Left colon (tissue), 2 donors: ENCODE measurements at regions of chr13 and their contacts with region 1.

Region 1: DNA sequence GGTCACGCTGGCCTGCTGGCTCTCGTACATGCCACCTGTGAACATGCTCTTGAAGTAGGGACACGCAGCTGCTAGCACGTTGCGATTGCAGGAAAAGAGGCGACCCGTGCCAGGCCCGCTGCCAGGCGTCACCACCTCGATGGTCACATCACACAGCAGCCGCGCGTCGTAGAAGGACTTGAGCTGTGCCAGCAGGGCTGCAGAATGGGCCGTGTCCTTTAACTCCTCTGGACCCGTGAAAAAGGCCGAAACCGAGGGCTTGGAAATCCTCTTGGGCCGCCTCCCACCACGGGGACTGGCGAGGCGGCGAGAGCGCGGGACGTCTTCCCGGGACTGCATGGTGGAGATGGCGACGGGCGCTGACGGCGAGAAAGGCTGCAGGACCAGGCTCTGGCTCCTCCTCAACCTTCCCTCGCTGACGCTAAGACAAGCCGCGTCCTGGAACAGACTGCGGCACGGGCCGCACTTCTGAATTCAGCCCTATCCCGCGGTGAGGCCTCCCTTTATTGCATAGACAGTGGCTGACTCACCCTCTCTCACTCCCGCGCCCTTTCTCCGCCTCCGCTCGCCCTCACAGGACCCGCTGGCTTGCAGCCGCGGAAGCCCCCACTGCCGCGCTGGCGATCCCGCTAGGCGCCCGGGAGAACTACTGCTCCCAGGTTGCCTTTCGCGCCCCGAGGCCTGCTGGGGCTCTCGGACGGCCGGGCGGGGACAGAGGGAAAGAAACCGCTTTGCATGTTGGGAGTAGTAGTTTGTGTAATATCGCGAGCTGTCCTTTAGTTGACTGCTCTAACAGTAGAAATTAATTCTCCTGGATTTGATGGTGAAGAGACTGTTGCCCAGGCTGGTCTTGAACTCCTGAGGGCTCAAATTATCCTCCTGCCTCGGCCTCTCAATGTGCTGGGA is at the start of gene KBTBD7:
- DNase-seq: peak; percentile 91 to 92
- ATAC-seq: peak; percentile 99
- total RNA-seq, gene KBTBD7: 5.5 to 6.5 TPM

Region 2: DNA sequence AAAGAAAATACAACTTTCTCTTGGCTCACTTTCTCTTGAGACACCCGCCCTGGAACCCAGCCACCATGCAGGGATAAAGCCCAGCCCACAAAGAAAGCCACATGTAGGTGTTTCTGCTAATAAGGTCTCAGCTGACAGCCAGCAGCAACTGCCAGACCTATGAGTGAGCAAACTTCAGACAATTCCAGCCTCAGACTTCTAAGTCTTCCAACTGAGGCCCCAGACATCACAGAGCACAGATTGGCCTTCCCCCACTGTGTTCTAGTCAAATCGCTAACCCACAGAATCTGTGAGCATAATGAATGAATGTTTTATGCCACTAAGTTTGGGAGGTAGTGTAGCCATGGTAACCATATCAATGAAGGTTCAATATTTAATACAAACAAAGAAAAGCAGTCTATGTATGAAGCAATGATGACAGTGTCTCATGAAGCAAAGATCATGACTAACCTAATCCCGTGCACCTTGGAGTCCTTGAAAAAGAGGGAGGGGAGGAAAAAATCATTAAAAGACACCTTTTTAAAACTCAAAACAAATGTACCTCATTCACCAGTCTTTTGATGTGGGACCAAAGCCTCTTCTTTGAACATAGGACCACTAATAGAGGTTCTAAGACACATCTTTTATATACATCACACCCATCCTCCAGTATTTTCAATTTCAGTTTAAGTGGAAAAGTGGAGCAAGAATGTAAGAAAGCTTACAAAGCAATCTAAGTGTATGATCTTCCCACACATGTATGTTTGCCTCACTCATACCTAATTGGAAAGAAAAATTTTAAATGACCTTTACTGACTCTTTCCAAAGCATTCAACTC is 429.4 kb before region 1 on chr13:
- intact Hi-C with region 1: no loop called
- DNase-seq: peak in 1 of 2 donors; percentile 38
- ATAC-seq: peak; percentile 82

Region 3: GRCh38 chr13:41132512-41133152 is 61.5 kb before region 1 on chr13 and contains the start of gene KBTBD6:
- intact Hi-C with region 1: loop called in 1 of 2 experiments (anchors 2 kb)
- DNase-seq: peak; percentile 94 to 96
- ATAC-seq: peak; percentile 100
- total RNA-seq, gene KBTBD6: 3.3 to 3.7 TPM